Pancreas (tissue), 10 donors: ENCODE measurements at regions of chr4 and their contacts with region 1.

Region 1: GRCh38 chr4:127732613-127733328 is 2.6 kb downstream of the SLC25A31 start:
- DNase-seq: no peak
- ATAC-seq: peak; percentile 50 to 79 (median 71)
- H3K4me3 ChIP-seq: no peak overlapping the region
- H3K27ac ChIP-seq: no peak overlapping the region
- H3K4me1 ChIP-seq: no peaks in the 10 kb centered on the region
- H3K27me3 ChIP-seq: no peaks in the 10 kb centered on the region
- CTCF ChIP-seq: peak in 3 of 4 donors; percentile 27 to 48 (median 39)

Region 2: GRCh38 chr4:127229855-127230608 is 502.7 kb before region 1 on chr4:
- intact Hi-C with region 1: no loop called
- DNase-seq: no peak
- ATAC-seq: no peak
- H3K4me3 ChIP-seq: no peak overlapping the region
- H3K27ac ChIP-seq: no peak overlapping the region
- H3K4me1 ChIP-seq: no peaks in the 10 kb centered on the region
- H3K27me3 ChIP-seq: no peaks in the 10 kb centered on the region
- CTCF ChIP-seq: no peak

Region 3: GRCh38 chr4:127604949-127605709 is 127.6 kb before region 1 on chr4:
- intact Hi-C with region 1: loop called (anchors 5 to 10 kb)
- DNase-seq: no peak
- ATAC-seq: peak in 3 of 4 donors; percentile 56 to 67 (median 63)
- H3K4me3 ChIP-seq: no peak overlapping the region
- H3K27ac ChIP-seq: no peak overlapping the region
- H3K4me1 ChIP-seq: no peaks in the 10 kb centered on the region
- H3K27me3 ChIP-seq: peaks cover 0 to 11% (median 5%) of the 10 kb centered on the region in 4 donors
- CTCF ChIP-seq: peak in 3 of 4 donors; percentile 19 to 33 (median 31)